ENCODE measurements at regions of chr5 and their contacts with region 1.

Region 1: GRCh38 chr5:79689541-79690466 is at the start of gene CMYA5:
- DNase-seq: peak; percentile 60 to 84 (median 69)
- ATAC-seq: peak; percentile 41 to 83 (median 70)
- H3K4me3 ChIP-seq: peak within 1 kb of the TSS; percentile 40 to 76 (median 64)
- H3K27ac ChIP-seq: peak within 1 kb of the TSS; percentile 84 to 99 (median 94)
- H3K4me1 ChIP-seq: peaks cover 0 to 12% (median 4%) of the 10 kb centered on the region in 12 donors
- H3K27me3 ChIP-seq: no peaks in the 10 kb centered on the region
- CTCF ChIP-seq: no peak
- POLR2A ChIP-seq: peak; percentile 54 to 88
- total RNA-seq, gene CMYA5: 760 to 2,421 (median 1,003) TPM

Region 2: DNA sequence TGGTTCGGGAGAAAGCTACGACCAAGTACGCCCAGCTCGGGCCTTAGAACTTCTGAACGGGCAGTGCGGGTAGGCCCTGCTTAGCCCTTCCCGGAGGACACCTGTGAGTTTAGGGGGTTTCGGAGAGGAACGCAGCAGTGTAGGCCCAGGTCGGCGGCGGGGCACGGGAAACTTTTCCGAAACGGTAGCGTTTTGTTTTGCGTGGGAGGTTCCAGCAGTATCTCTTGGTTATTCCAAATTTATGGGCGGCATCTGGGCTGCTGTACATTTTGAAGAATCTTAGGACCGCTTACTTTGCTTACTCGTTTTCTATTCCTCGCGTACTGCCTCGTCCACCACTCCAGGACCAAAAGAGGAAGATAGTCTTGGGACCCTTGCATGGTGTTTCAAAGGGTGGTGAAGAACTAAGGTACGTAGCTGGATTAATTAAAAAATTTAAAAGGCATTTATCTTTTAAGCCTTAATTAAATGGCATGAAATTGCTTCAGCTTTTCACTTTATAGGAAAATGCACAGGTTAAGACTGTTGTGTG is 77.1 kb before region 1 on chr5:
- intact Hi-C with region 1: loop called in 1 of 10 experiments (anchors 5 kb)
- DNase-seq: no peak
- ATAC-seq: peak in 3 of 4 donors; percentile 6 to 16 (median 14)
- H3K4me3 ChIP-seq: peak overlapping the region; percentile 58 to 95 (median 90)
- H3K27ac ChIP-seq: peak overlapping the region; percentile 82 to 96 (median 92)
- H3K4me1 ChIP-seq: peaks cover 0 to 54% (median 20%) of the 10 kb centered on the region in 12 donors
- H3K27me3 ChIP-seq: no peaks in the 10 kb centered on the region
- CTCF ChIP-seq: no peak
- POLR2A ChIP-seq: no peak

Region 3: GRCh38 chr5:79621042-79621441 is 68.8 kb before region 1 on chr5:
- intact Hi-C with region 1: loop called in 1 of 10 experiments (anchors 10 kb)
- DNase-seq: no peak
- ATAC-seq: no peak
- H3K4me3 ChIP-seq: no peak overlapping the region
- H3K27ac ChIP-seq: no peak overlapping the region
- H3K4me1 ChIP-seq: peaks cover 0 to 46% (median 0%) of the 10 kb centered on the region in 12 donors
- H3K27me3 ChIP-seq: no peaks in the 10 kb centered on the region
- CTCF ChIP-seq: no peak
- POLR2A ChIP-seq: no peak

Region 4: GRCh38 chr5:79728396-79728795 is 38.6 kb after region 1 on chr5:
- intact Hi-C with region 1: loop called in 1 of 10 experiments (anchors 5 kb)
- DNase-seq: no peak
- ATAC-seq: peak in 2 of 4 donors; percentile 19 to 24
- H3K4me3 ChIP-seq: no peak overlapping the region
- H3K27ac ChIP-seq: peak overlapping the region in 11 of 12 donors; percentile 9 to 85 (median 70)
- H3K4me1 ChIP-seq: peaks cover 0 to 21% (median 2%) of the 10 kb centered on the region in 12 donors
- H3K27me3 ChIP-seq: no peaks in the 10 kb centered on the region
- CTCF ChIP-seq: no peak
- POLR2A ChIP-seq: no peak

Region 5: DNA sequence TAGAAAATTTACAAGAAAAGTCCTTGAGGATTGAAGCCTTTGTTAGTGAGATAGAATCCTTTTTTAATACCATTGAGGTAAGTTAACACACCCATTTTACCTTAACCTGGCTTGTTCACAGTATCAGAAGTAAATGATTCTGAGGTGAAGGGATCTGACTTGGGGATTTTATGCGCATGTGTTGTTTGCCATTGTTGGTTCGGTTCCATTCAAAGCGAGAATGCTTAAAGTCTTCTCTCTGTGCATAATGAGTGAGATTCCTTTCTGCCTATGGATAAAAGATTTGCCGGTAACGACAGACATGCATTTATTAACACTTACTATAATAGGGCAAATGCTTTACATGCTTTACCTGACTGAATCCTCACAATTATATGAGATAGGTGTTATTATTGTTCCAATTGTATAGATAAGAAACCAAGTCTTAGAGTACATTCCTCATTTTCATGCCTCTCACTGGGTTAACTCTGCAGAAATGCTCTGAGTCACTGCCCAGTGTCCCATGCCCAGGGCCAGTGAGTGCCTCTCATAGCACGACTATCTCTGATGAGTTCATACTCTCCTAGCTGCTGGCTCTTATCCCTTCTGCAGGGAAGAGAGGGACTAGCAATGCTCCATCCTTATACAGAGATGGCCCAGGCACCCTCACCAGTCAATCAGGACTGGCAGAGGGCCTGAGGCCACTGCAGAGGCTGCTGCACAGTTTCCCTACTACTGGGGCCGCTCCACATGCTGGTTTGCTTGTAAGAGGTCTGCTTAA is 54.2 kb after region 1 on chr5:
- intact Hi-C with region 1: loop called in 2 of 10 experiments (anchors 5 kb)
- DNase-seq: peak; percentile 61 to 75 (median 70)
- ATAC-seq: peak; percentile 96 to 98 (median 97)
- H3K4me3 ChIP-seq: no peak overlapping the region
- H3K27ac ChIP-seq: peak overlapping the region in 11 of 12 donors; percentile 45 to 92 (median 73)
- H3K4me1 ChIP-seq: peaks cover 0 to 40% (median 16%) of the 10 kb centered on the region in 12 donors
- H3K27me3 ChIP-seq: no peaks in the 10 kb centered on the region
- CTCF ChIP-seq: no peak
- POLR2A ChIP-seq: no peak

Region 6: GRCh38 chr5:79857714-79858409 is 168.1 kb after region 1 on chr5:
- intact Hi-C with region 1: loop called in 4 of 10 experiments (anchors 5 to 10 kb)
- DNase-seq: peak; percentile 60 to 83 (median 73)
- ATAC-seq: peak; percentile 38 to 69 (median 58)
- H3K4me3 ChIP-seq: no peak overlapping the region
- H3K27ac ChIP-seq: no peak overlapping the region
- H3K4me1 ChIP-seq: peaks cover 0 to 23% (median 3%) of the 10 kb centered on the region in 12 donors
- H3K27me3 ChIP-seq: no peaks in the 10 kb centered on the region
- CTCF ChIP-seq: peak; percentile 87 to 97 (median 96)
- POLR2A ChIP-seq: no peak

Measured in heart left ventricle (tissue), 16 donors.